WTC11 (cell line): ENCODE measurements at regions of chr9 and their contacts with region 1.

Region 1: GRCh38 chr9:114098016-114098935 is 816 bp downstream of the KIF12 start:
- DNase-seq: peak; percentile 89
- ATAC-seq: peak; percentile 87
- H3K4me3 Mint-ChIP-seq: peak overlapping the region; percentile 87
- H3K27ac Mint-ChIP-seq: no peak overlapping the region
- H3K4me1 Mint-ChIP-seq: peaks cover 18% of the 10 kb centered on the region
- H3K27me3 Mint-ChIP-seq: peaks cover 70% of the 10 kb centered on the region
- CTCF ChIP-seq: no peak

Region 2: DNA sequence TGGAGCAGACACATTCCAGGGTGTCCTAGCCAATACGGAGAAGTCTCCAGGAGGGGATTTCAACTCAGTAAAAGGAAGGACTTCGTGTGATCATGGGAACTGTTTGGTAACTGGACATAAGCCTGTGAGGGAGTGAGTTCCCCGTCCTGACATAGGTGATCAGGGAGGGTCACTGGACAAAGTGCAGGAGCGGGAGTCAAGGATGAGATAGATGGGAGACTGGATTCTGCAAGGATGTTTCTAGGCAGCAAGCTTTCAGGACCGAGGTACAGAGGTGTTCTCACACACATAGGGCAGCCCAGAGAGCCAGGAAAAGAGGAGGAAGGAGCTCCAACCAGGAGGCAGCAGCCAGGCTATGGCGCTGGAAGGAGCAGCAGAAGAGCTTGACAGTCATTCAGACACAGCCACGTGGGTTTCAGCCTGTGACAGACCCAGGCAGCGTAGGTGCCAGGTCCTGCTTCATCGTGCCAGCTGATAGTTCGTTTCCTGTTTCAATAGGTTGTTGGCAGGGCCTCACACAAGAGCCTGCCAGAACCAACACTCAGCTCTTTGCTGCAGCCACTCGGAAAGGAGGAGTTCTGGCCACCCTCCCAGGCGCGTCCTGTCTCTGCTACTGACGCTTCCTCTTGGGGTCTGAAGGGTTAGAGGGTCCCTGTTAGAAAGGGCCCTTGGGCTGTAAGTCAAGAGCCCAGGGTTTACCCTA is 104.3 kb before region 1 on chr9:
- CTCF ChIA-PET with region 1: no interaction called
- POLR2A ChIA-PET with region 1: no interaction called
- DNase-seq: no peak
- ATAC-seq: no peak
- H3K4me3 Mint-ChIP-seq: no peak overlapping the region
- H3K27ac Mint-ChIP-seq: no peak overlapping the region
- H3K4me1 Mint-ChIP-seq: no peaks in the 10 kb centered on the region
- H3K27me3 Mint-ChIP-seq: no peaks in the 10 kb centered on the region
- CTCF ChIP-seq: no peak

Region 3: GRCh38 chr9:114070188-114071103 is 27.8 kb before region 1 on chr9:
- CTCF ChIA-PET with region 1: no interaction called
- POLR2A ChIA-PET with region 1: no interaction called
- DNase-seq: no peak
- ATAC-seq: no peak
- H3K4me3 Mint-ChIP-seq: no peak overlapping the region
- H3K27ac Mint-ChIP-seq: no peak overlapping the region
- H3K4me1 Mint-ChIP-seq: peaks cover 2% of the 10 kb centered on the region
- H3K27me3 Mint-ChIP-seq: peaks cover 9% of the 10 kb centered on the region
- CTCF ChIP-seq: no peak

Region 4: GRCh38 chr9:114124138-114124537 is 25.9 kb after region 1 on chr9:
- CTCF ChIA-PET with region 1: interaction called, 12 read pairs
- POLR2A ChIA-PET with region 1: no interaction called
- DNase-seq: no peak
- ATAC-seq: no peak
- H3K4me3 Mint-ChIP-seq: no peak overlapping the region
- H3K27ac Mint-ChIP-seq: no peak overlapping the region
- H3K4me1 Mint-ChIP-seq: peaks cover 9% of the 10 kb centered on the region
- H3K27me3 Mint-ChIP-seq: peaks cover 37% of the 10 kb centered on the region
- CTCF ChIP-seq: no peak

Region 5: GRCh38 chr9:114178756-114179450 is 80.6 kb after region 1 on chr9:
- CTCF ChIA-PET with region 1: no interaction called
- POLR2A ChIA-PET with region 1: no interaction called
- DNase-seq: no peak
- ATAC-seq: no peak
- H3K4me3 Mint-ChIP-seq: no peak overlapping the region
- H3K27ac Mint-ChIP-seq: no peak overlapping the region
- H3K4me1 Mint-ChIP-seq: no peaks in the 10 kb centered on the region
- H3K27me3 Mint-ChIP-seq: no peaks in the 10 kb centered on the region
- CTCF ChIP-seq: no peak